ENCODE measurements at regions of chr11 and their contacts with region 1.

Region 1: GRCh38 chr11:64358907-64359711 is at the start of gene RPS6KA4:
- DNase-seq: peak; percentile 71
- H3K4me3 ChIP-seq: peak within 1 kb of the TSS; percentile 61 to 97 (median 93)
- H3K27ac ChIP-seq: peak within 1 kb of the TSS; percentile 55
- H3K4me1 ChIP-seq: peaks cover 47% of the 10 kb centered on the region
- H3K27me3 ChIP-seq: no peaks in the 10 kb centered on the region
- CTCF ChIP-seq: no peak
- total RNA-seq, gene RPS6KA4: 45.0 to 92.1 TPM

Region 2: DNA sequence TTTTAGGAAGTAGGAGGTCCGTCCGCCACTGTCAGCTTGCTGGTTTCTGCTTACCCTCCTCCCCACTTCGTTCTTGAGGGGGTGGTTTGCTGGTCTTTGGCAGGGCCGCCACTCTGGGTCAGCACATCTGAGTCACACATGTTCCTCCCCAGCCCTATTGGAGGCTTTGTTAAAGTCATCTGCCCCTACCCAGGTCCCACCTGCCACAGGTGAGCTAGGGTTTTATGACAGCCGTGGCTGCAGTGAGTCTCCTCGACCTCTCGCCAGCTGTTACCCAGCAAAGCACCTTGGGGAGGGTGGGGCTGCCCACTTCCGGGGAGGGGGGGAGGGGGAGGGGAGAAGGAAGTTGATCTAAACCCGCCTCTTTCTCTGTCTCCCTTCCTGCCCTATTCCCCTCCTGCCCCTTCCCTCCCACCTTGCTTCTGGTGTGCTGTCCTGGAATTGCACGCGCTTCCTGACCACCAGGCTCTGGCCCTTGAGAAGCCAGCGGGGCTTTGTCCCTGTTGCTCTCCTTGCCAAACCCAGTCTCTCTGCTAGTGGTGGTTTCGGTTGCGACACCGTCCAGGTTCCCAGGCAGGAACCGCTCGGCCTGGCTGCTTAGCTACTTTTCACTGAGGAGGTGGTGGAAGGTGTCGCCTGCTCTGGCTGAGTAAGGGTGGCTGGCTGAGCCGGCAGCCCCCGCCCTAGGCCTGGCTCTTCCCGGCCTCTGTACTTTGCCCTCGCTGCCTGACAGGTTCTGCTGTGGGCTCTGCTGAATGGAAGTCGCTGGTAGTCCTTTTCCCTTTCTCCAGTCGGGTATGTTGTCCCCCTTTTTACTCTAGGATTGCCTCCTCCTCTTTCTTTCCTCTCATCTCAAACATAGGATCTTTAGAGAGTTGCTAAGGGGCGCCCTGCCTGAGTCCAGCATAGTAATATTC is 470.7 kb before region 1 on chr11:
- CTCF ChIA-PET with region 1: no interaction called
- dilution Hi-C with region 1: no loop called
- in situ Hi-C with region 1: no loop called
- intact Hi-C with region 1: no loop called
- DNase-seq: peak; percentile 87
- H3K4me3 ChIP-seq: peak overlapping the region; percentile 47 to 53 (median 53)
- H3K27ac ChIP-seq: peak overlapping the region; percentile 85
- H3K4me1 ChIP-seq: peaks cover 34% of the 10 kb centered on the region
- H3K27me3 ChIP-seq: no peaks in the 10 kb centered on the region
- CTCF ChIP-seq: no peak

Region 3: GRCh38 chr11:64240394-64241174 is 118.5 kb before region 1 on chr11 and contains the start of gene FKBP2:
- CTCF ChIA-PET with region 1: interaction called, 22 read pairs
- dilution Hi-C with region 1: no loop called
- in situ Hi-C with region 1: no loop called
- intact Hi-C with region 1: no loop called
- DNase-seq: peak; percentile 97
- H3K4me3 ChIP-seq: peak within 1 kb of the TSS; percentile 79 to 92 (median 85)
- H3K27ac ChIP-seq: peak within 1 kb of the TSS; percentile 95
- H3K4me1 ChIP-seq: peaks cover 45% of the 10 kb centered on the region
- H3K27me3 ChIP-seq: no peaks in the 10 kb centered on the region
- CTCF ChIP-seq: no peak
- total RNA-seq, gene FKBP2: 15.5 to 59.6 TPM

Region 4: DNA sequence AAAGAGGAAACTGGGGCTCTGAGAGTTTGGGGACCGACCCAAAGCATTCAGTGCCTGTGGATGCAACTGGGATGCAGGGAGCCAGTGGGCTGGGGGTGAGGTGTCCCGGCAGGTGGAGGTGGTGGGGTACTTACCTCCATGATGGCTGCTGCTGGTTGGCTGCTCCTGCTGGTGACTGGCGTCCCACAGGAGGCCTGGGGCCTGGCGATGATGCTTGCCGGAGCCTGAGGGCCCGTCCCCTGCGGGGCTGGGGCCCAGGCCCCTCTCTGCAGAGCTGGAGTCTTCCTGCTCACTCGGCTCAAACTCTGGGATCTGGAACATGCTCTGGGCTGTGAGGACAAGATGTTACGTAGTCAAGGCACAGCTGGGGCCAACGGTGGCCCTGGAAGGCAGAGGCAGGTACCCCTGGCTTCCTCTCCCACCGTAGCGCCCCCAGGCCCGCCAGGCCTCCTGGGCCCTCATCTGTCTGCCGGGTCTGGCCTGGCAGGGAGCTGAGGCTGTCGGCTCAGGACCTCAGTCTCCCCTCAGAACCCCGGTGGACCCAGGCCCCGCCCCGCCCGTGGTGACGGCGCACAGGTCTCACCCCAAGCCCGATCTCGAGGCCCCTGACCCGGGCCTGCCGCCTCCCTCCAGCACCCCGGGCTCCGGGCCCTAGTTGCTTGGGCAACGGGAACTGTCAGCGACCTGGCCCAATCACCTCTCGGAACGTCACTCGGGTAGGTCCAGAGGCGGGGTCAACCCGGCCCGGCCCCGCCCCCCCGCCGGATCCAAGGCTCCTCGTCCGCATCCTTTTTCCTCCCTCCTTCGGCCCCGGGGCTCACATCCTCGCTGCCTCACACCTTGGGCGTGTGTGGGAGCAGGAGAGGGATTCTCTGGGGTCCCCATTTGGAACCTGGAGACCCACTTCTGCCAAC is 74.8 kb before region 1 on chr11 and contains the start of gene BAD:
- CTCF ChIA-PET with region 1: no interaction called
- dilution Hi-C with region 1: no loop called
- in situ Hi-C with region 1: no loop called
- intact Hi-C with region 1: loop called (anchors 1 kb)
- DNase-seq: peak; percentile 88
- H3K4me3 ChIP-seq: peak within 1 kb of the TSS; percentile 58 to 81 (median 78)
- H3K27ac ChIP-seq: peak within 1 kb of the TSS; percentile 91
- H3K4me1 ChIP-seq: peaks cover 15% of the 10 kb centered on the region
- H3K27me3 ChIP-seq: no peaks in the 10 kb centered on the region
- CTCF ChIP-seq: no peak
- total RNA-seq, gene BAD: 52.2 to 54.9 TPM

Region 5: GRCh38 chr11:64331557-64332371 is 27.3 kb before region 1 on chr11:
- CTCF ChIA-PET with region 1: interaction called, 8 read pairs
- dilution Hi-C with region 1: no loop called
- in situ Hi-C with region 1: no loop called
- intact Hi-C with region 1: loop called (anchors 2 kb)
- DNase-seq: peak; percentile 89
- H3K4me3 ChIP-seq: no peak overlapping the region
- H3K27ac ChIP-seq: peak overlapping the region; percentile 35
- H3K4me1 ChIP-seq: peaks cover 24% of the 10 kb centered on the region
- H3K27me3 ChIP-seq: no peaks in the 10 kb centered on the region
- CTCF ChIP-seq: peak; percentile 84 to 95

Region 6: DNA sequence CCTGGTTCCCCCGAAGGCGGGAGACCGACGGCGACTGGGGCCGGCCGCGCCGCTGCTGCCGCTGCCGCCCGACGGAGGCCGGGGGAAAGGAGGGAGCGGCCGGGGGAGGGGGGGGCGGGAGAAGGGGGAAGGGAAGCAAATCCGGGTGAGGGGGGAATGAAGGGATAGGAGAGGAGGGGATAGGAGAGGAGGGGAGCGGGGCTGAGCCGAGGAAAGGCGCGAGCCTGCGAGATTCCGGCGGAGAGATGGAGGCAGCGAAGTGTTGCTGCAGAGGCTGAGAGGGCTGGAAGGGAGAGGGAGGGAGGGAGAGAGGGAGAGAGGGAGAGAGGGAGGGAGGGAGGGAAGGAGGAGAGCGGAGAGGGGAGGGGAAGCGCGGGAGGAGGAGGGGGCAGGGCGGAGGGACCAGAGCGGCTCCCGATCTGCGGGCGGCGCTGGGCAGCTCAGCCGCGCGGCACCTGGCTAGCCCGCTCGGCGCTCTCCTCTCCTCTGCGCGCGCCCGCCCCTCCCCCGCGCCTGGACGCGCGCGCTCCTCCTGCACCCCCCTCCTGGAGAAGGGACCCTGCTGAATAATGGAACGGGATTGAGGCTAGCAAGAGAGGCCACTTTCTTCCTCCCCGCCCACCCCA is 284.3 kb after region 1 on chr11:
- CTCF ChIA-PET with region 1: no interaction called
- dilution Hi-C with region 1: no loop called
- in situ Hi-C with region 1: no loop called
- intact Hi-C with region 1: no loop called
- DNase-seq: no peak
- H3K4me3 ChIP-seq: no peak overlapping the region
- H3K27ac ChIP-seq: no peak overlapping the region
- H3K4me1 ChIP-seq: no peaks in the 10 kb centered on the region
- H3K27me3 ChIP-seq: peaks cover 33% of the 10 kb centered on the region
- CTCF ChIP-seq: no peak

Region 7: DNA sequence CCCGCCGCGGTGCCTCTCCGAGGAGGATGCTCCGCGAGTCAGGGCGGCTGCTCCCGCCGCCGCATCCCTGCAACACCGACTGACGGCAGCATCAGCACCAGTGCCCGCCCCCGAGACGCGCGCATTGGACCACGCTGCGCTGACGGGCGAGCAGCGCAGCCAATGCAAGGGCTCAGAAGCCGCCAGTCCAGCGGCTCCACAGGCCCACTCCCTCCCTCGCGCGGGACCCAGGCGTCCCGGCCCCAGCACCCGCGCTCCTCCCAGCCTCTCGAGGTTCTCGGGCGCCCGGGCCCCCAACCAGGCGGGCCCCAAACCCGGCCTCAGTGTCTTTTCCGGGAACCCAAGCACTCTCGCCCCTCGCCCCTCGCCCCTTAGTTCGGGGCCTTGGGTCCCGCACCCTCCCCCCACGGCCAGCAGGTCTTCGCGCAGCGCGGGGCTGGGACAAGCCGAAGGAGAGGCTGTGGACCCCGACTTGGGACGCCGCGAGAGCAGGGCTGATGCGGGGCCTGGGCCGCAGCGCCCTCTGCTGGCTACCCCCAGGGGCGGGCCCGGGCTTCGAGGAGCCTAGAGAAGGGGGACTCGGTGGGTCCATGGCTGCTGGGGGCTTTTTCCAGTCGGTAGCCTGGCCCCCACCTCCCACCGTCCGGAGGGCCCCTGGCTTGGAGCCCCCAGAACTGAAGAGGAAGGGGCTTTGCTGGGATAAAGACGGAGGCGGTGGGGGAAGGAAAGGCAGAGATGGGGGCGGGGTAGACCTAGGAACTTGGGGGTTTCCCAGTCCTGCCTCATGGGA is 364.2 kb after region 1 on chr11 and contains the start of gene NRXN2:
- CTCF ChIA-PET with region 1: interaction called, 4 read pairs
- dilution Hi-C with region 1: no loop called
- in situ Hi-C with region 1: no loop called
- intact Hi-C with region 1: loop called (anchors 2 kb)
- DNase-seq: peak; percentile 77
- H3K4me3 ChIP-seq: peak within 1 kb of the TSS; percentile 55 to 85 (median 57)
- H3K27ac ChIP-seq: no peak within 1 kb of the TSS
- H3K4me1 ChIP-seq: peaks cover 8% of the 10 kb centered on the region
- H3K27me3 ChIP-seq: no peaks in the 10 kb centered on the region
- CTCF ChIP-seq: peak; percentile 80 to 95
- total RNA-seq, gene NRXN2: 4.5 to 18.8 TPM

Region 8: GRCh38 chr11:65416060-65416824 is 1057.1 kb after region 1 on chr11:
- CTCF ChIA-PET with region 1: no interaction called
- dilution Hi-C with region 1: no loop called
- in situ Hi-C with region 1: no loop called
- intact Hi-C with region 1: no loop called
- DNase-seq: peak; percentile 68
- H3K4me3 ChIP-seq: peak overlapping the region in 1 of 3 experiments; percentile 39
- H3K27ac ChIP-seq: peak overlapping the region; percentile 16
- H3K4me1 ChIP-seq: peaks cover 51% of the 10 kb centered on the region
- H3K27me3 ChIP-seq: no peaks in the 10 kb centered on the region
- CTCF ChIP-seq: peak; percentile 93 to 97

Measured in mammary epithelial cell (primary cell).